ENCODE measurements at regions of chr5 and their contacts with region 1.

Region 1: DNA sequence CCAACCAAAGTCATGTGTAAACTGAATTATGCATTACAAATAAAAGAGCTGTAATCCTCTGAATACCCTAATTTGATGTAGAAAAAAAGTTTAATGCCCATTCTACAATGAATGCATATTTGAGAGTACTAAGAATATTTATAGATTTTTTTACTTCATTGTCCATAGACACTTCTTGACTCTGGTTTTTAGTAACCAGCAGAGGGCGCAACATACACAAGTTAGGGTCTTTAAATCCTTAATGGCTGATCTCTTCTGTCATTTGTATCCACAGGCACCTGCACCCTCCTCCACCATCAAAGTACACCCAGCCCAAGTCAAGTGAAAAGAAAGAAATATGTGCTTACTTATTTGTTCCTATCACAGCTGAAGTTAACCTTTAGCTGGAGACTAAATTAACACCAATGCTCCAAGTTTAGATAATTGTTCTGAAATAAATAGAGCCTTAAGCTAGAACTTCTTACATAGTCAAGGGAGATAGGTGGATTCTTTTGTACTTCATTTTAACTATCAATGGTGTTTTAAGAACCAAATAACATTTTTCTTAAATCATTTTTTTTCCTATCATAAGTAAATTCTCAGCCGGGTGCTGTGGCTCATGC is 524.2 kb upstream of the DAB2 start:
- DNase-seq: peak; percentile 90
- H3K4me3 Mint-ChIP-seq: no peak overlapping the region
- H3K27ac Mint-ChIP-seq: peak overlapping the region; percentile 7
- H3K4me1 Mint-ChIP-seq: peaks cover 3% of the 10 kb centered on the region
- H3K27me3 Mint-ChIP-seq: peaks cover 2% of the 10 kb centered on the region

Region 2: GRCh38 chr5:39578887-39579497 is 370.0 kb before region 1 on chr5:
- intact Hi-C with region 1: loop called (anchors 10 kb)
- DNase-seq: no peak
- H3K4me3 Mint-ChIP-seq: no peak overlapping the region
- H3K27ac Mint-ChIP-seq: no peak overlapping the region
- H3K4me1 Mint-ChIP-seq: peaks cover 6% of the 10 kb centered on the region
- H3K27me3 Mint-ChIP-seq: peaks cover 19% of the 10 kb centered on the region

Region 3: GRCh38 chr5:40410231-40410861 is 461.4 kb after region 1 on chr5:
- intact Hi-C with region 1: loop called (anchors 1 kb)
- DNase-seq: peak; percentile 93
- H3K4me3 Mint-ChIP-seq: peak overlapping the region; percentile 79
- H3K27ac Mint-ChIP-seq: peak overlapping the region; percentile 93
- H3K4me1 Mint-ChIP-seq: peaks cover 51% of the 10 kb centered on the region
- H3K27me3 Mint-ChIP-seq: no peaks in the 10 kb centered on the region

Region 4: DNA sequence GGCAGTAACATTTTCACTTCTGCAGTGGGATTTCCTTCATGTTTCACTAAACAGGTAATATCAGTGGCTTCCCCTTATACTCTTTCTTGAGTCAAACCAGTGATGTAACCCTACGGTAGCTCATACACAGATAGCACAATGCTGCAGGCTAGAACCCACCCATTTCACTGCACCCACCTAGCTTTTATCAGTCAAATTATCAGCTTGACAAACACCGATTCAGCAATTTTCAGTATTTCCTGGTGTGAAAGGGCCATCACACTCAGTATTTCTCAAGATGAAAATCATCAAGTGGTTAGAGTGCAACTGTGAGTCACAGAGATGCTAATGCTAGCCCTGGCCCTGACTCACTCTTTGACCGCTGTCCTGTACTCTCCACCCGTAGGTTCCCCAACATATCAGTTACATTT is 488.5 kb after region 1 on chr5:
- intact Hi-C with region 1: loop called (anchors 10 kb)
- DNase-seq: peak; percentile 66
- H3K4me3 Mint-ChIP-seq: peak overlapping the region; percentile 16
- H3K27ac Mint-ChIP-seq: peak overlapping the region; percentile 79
- H3K4me1 Mint-ChIP-seq: peaks cover 69% of the 10 kb centered on the region
- H3K27me3 Mint-ChIP-seq: no peaks in the 10 kb centered on the region

Region 5: DNA sequence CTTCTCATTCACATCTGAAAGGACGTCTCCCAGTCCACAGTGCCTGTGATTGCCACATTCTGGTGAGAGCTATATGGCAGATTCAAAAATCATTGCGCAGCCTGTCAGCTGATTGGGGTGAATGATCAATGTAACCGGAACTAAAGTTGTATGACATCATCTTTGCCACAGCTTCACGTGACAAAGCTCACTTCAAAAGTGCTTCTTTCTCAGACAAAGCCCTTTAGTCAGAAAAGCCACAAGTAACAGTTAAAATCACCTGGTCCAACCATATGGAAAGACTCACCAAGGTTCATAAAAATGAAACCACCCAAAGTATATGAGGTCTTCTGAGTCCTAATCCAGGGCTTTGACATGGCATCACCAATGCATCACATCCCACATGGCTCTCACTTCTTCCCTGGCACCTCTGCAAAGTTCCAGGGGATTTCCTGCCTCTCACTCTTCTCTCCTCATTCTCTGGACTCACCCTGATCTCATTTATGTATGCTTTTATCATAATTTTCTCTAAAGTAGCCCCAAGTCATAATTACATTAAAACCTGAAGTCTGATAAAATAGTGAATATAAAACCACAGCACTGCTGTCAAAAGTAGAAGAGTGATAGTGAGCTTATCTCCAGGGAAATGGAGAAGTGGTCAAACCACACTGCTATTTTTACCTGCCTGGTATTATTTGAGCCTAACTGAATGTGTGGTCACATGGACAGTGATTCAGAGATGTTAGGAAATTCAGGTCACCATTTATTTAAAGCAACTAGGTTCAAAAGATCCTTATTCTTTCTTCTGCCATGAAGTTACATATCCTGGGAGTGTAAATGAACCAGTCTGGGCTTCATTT is 537.7 kb after region 1 on chr5:
- intact Hi-C with region 1: loop called (anchors 2 kb)
- DNase-seq: peak; percentile 89
- H3K4me3 Mint-ChIP-seq: peak overlapping the region; percentile 45
- H3K27ac Mint-ChIP-seq: peak overlapping the region; percentile 89
- H3K4me1 Mint-ChIP-seq: peaks cover 55% of the 10 kb centered on the region
- H3K27me3 Mint-ChIP-seq: no peaks in the 10 kb centered on the region

Region 6: DNA sequence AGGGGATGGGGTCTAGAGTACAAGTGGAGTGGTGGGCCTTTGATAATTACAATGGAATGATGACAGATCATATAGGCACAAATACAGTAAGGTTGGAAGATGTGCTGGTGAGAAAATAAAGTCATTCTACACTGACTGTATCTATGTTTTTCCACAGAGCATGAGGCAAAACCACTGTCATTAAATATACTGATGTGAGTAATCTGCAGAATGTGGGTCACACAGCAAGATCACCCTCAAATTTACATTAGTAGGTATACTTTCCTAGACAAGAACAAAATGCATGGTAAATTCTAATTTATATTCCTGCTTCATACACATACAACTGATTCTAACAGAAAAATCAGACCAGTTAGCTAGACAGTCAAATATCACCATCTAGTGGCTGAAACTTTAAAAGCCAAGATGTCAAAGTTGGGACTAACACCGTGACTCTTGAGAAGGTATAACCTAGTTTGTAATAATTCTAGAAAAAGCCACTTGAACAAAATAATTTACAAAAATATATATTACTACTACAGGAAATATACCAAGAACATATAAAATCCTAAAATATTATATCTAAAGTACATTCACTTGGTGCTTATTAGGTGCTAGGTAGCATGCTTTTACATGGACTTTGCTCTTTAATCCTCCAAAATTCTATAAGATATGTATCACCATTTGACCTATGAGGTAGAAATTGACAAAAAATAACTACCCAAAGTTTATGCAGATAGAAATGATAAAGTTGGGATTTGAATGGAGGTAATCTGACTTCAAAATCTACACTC is 787.3 kb after region 1 on chr5:
- intact Hi-C with region 1: loop called (anchors 1 kb)
- DNase-seq: peak; percentile 77
- H3K4me3 Mint-ChIP-seq: no peak overlapping the region
- H3K27ac Mint-ChIP-seq: peak overlapping the region; percentile 12
- H3K4me1 Mint-ChIP-seq: peaks cover 18% of the 10 kb centered on the region
- H3K27me3 Mint-ChIP-seq: no peaks in the 10 kb centered on the region

Region 7: DNA sequence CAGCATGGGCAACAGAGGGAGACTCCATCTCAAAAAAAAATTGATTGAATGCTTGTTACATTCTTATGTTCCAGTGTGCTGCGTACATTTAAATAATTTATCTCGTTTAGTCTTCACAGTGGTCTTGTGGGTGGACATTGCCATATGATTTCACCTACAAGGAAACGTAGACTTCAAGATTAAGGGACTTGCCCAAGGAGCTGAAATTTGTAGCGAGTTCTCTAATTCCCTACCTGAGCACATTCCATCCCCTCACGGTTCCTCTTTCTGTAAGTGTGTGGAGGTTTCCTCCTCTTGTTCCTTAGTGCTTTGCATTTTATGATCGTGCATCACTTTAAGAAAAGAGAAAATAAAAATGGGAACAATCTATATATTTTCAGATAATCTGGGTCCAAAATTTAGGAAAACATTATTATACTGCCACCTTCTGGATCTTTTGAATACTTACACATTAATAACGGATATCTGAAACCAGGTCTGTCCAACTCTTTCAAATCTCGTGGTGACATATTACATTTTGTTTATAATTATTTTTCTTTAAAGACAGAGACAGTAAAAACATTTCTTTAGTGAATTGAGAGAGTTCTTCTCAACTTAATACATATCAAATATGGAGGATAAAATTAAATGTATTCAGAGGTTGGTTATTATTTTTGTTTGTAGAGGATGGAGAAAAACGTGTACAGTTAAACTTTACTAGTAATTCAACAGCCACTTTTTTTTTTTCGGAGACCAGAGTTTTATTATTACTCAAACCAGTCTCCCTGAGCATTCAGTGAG is 930.4 kb after region 1 on chr5:
- intact Hi-C with region 1: loop called (anchors 1 kb)
- DNase-seq: no peak
- H3K4me3 Mint-ChIP-seq: no peak overlapping the region
- H3K27ac Mint-ChIP-seq: no peak overlapping the region
- H3K4me1 Mint-ChIP-seq: peaks cover 3% of the 10 kb centered on the region
- H3K27me3 Mint-ChIP-seq: peaks cover 13% of the 10 kb centered on the region

Measured in activated CD4-positive, alpha-beta T cell treated with anti-CD3 and anti-CD28 coated beads, Interleukin-2, amount 10 ng/mL, durations not matched to agents 24 days and 14 days (primary cell).